ENCODE measurements at regions of chr20 and their contacts with region 1.

Region 1: DNA sequence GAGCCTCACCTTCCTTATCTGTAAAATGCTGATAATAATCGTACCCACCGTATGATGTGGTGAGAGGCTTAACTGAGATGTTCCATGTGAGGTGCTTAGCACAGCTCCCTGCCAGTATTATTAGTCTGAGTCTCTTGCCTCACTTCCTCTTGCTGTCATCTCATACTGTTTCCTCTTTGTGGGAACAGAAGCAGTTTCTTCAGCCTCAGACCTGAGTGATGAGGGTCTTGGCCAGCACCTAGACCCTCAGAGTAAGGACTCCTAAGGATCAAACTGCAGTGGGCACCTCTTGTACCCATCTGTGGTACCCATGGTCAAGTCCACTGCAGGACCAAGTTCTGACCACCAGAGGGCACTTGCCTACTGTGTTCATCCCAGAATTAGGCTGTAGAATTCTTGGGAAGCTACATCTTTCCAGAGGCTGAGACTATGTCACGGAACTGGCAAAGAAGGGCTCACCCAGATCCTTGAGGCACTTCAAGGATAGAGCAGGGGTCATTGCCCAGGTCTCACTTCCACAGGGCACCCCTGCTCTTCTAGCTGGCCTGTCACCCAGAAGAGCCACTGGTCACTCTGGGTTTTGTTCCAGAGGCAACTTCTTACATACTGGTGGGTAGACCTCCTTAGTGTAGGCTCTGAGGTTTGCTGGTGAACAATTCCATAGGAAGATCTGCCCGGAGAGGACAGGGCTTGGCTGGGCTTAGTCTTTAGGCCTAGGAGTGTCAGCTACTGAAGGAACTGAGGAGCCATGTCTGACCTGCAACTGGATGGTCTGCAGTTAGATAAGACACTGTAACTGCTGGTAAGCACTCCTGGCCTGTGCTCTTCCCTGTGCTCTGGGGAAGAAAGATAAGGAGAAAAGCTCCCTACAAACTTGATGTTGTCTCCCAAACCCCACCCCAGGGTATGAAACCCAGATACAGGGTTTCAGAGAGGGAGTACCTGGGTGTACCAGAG is 20.6 kb upstream of the SGK2 start:
- DNase-seq: peak; percentile 39
- H3K4me3 ChIP-seq: no peak overlapping the region
- H3K27ac ChIP-seq: no peak overlapping the region
- H3K4me1 ChIP-seq: peaks cover 11% of the 10 kb centered on the region
- H3K27me3 ChIP-seq: no peaks in the 10 kb centered on the region
- CTCF ChIP-seq: peak; percentile 96 to 97

Region 2: GRCh38 chr20:43590392-43591323 is 52.5 kb after region 1 on chr20 and contains the start of gene IFT52:
- CTCF ChIA-PET with region 1: no interaction called
- dilution Hi-C with region 1: no loop called
- in situ Hi-C with region 1: no loop called
- intact Hi-C with region 1: loop called (anchors 2 kb)
- DNase-seq: peak; percentile 93
- H3K4me3 ChIP-seq: peak within 1 kb of the TSS; percentile 96 to 98 (median 97)
- H3K27ac ChIP-seq: peak within 1 kb of the TSS; percentile 89
- H3K4me1 ChIP-seq: peaks cover 5% of the 10 kb centered on the region
- H3K27me3 ChIP-seq: no peaks in the 10 kb centered on the region
- CTCF ChIP-seq: no peak
- total RNA-seq, gene IFT52: 21.5 to 31.2 TPM

Region 3: GRCh38 chr20:43749734-43750294 is 211.6 kb after region 1 on chr20:
- CTCF ChIA-PET with region 1: interaction called, 4 read pairs
- dilution Hi-C with region 1: no loop called
- in situ Hi-C with region 1: no loop called
- intact Hi-C with region 1: loop called (anchors 2 kb)
- DNase-seq: peak; percentile 57
- H3K4me3 ChIP-seq: no peak overlapping the region
- H3K27ac ChIP-seq: no peak overlapping the region
- H3K4me1 ChIP-seq: peaks cover 22% of the 10 kb centered on the region
- H3K27me3 ChIP-seq: no peaks in the 10 kb centered on the region
- CTCF ChIP-seq: peak; percentile 85 to 99

Region 4: GRCh38 chr20:44080646-44081267 is 542.6 kb after region 1 on chr20:
- CTCF ChIA-PET with region 1: no interaction called
- dilution Hi-C with region 1: no loop called
- in situ Hi-C with region 1: loop called (anchors 25 kb)
- intact Hi-C with region 1: loop called (anchors 1 kb)
- DNase-seq: peak; percentile 57
- H3K4me3 ChIP-seq: no peak overlapping the region
- H3K27ac ChIP-seq: no peak overlapping the region
- H3K4me1 ChIP-seq: peaks cover 8% of the 10 kb centered on the region
- H3K27me3 ChIP-seq: no peaks in the 10 kb centered on the region
- CTCF ChIP-seq: peak; percentile 92 to 100

Measured in mammary epithelial cell (primary cell).